ENCODE measurements at regions of chr1 and their contacts with region 1.

Region 1: GRCh38 chr1:43668956-43669355 is 19.0 kb downstream of the KDM4A start:
- DNase-seq: peak; percentile 65
- H3K4me3 ChIP-seq: no peak overlapping the region
- H3K27ac ChIP-seq: peak overlapping the region; percentile 21
- H3K4me1 ChIP-seq: peaks cover 45% of the 10 kb centered on the region
- H3K27me3 ChIP-seq: no peaks in the 10 kb centered on the region
- CTCF ChIP-seq: no peak

Region 2: GRCh38 chr1:43367904-43368645 is 300.9 kb before region 1 on chr1 and contains the start of gene ELOVL1:
- CTCF ChIA-PET with region 1: no interaction called
- dilution Hi-C with region 1: no loop called
- in situ Hi-C with region 1: no loop called
- intact Hi-C with region 1: loop called (anchors 5 kb)
- DNase-seq: peak; percentile 84
- H3K4me3 ChIP-seq: peak within 1 kb of the TSS; percentile 76 to 81 (median 80)
- H3K27ac ChIP-seq: peak within 1 kb of the TSS; percentile 65
- H3K4me1 ChIP-seq: peaks cover 36% of the 10 kb centered on the region
- H3K27me3 ChIP-seq: no peaks in the 10 kb centered on the region
- CTCF ChIP-seq: peak in 1 of 2 donors; percentile 48
- total RNA-seq, gene ELOVL1: 34.7 to 137 TPM

Region 3: GRCh38 chr1:43650310-43651085 is 18.5 kb before region 1 on chr1:
- CTCF ChIA-PET with region 1: interaction called, 4 read pairs
- dilution Hi-C with region 1: no loop called
- in situ Hi-C with region 1: no loop called
- intact Hi-C with region 1: loop called (anchors 1 kb)
- DNase-seq: peak; percentile 95
- H3K4me3 ChIP-seq: peak overlapping the region; percentile 69 to 81 (median 75)
- H3K27ac ChIP-seq: peak overlapping the region; percentile 92
- H3K4me1 ChIP-seq: peaks cover 20% of the 10 kb centered on the region
- H3K27me3 ChIP-seq: no peaks in the 10 kb centered on the region
- CTCF ChIP-seq: no peak

Region 4: GRCh38 chr1:43691871-43692815 is 23.2 kb after region 1 on chr1:
- CTCF ChIA-PET with region 1: no interaction called
- dilution Hi-C with region 1: no loop called
- in situ Hi-C with region 1: no loop called
- intact Hi-C with region 1: no loop called
- DNase-seq: no peak
- H3K4me3 ChIP-seq: no peak overlapping the region
- H3K27ac ChIP-seq: no peak overlapping the region
- H3K4me1 ChIP-seq: peaks cover 9% of the 10 kb centered on the region
- H3K27me3 ChIP-seq: no peaks in the 10 kb centered on the region
- CTCF ChIP-seq: no peak

Region 5: DNA sequence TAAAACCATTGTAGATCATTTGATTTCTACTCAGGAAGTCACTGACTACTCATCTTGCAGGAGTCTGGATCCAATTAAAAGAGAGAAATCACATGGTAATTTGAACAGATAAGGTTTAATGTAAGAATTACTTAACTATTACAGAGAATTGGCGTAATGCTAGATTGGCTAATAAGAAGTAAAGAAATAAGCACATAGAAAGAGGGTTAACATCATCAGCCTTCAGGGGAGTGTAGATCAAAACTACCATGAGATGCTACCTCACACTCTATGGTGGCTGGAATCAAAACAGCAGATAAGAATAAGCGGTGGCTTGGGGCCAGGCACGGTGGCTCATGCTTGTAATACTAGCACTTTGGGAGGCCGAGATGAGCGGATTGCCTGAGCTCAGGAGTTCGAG is 50.1 kb after region 1 on chr1:
- CTCF ChIA-PET with region 1: no interaction called
- dilution Hi-C with region 1: loop called (anchors 5 kb)
- in situ Hi-C with region 1: no loop called
- intact Hi-C with region 1: no loop called
- DNase-seq: no peak
- H3K4me3 ChIP-seq: no peak overlapping the region
- H3K27ac ChIP-seq: no peak overlapping the region
- H3K4me1 ChIP-seq: no peaks in the 10 kb centered on the region
- H3K27me3 ChIP-seq: no peaks in the 10 kb centered on the region
- CTCF ChIP-seq: no peak

Region 6: GRCh38 chr1:44029906-44030604 is 361.1 kb after region 1 on chr1:
- CTCF ChIA-PET with region 1: no interaction called
- dilution Hi-C with region 1: no loop called
- in situ Hi-C with region 1: no loop called
- intact Hi-C with region 1: loop called (anchors 10 kb)
- DNase-seq: peak; percentile 88
- H3K4me3 ChIP-seq: peak overlapping the region; percentile 78 to 87 (median 83)
- H3K27ac ChIP-seq: peak overlapping the region; percentile 83
- H3K4me1 ChIP-seq: peaks cover 29% of the 10 kb centered on the region
- H3K27me3 ChIP-seq: no peaks in the 10 kb centered on the region
- CTCF ChIP-seq: no peak